ENCODE measurements at regions of chr12 and their contacts with region 1.

Region 1: GRCh38 chr12:29380536-29381523 is at the start of gene ERGIC2:
- DNase-seq: peak; percentile 79 to 98 (median 86)
- ATAC-seq: peak; percentile 87
- H3K4me3 ChIP-seq: peak within 1 kb of the TSS; percentile 83
- H3K4me3 Mint-ChIP-seq: peak within 1 kb of the TSS; percentile 98
- H3K27ac ChIP-seq: peak within 1 kb of the TSS; percentile 94 to 96
- H3K27ac Mint-ChIP-seq: peak within 1 kb of the TSS; percentile 96
- H3K4me1 ChIP-seq: no peaks in the 10 kb centered on the region
- H3K4me1 Mint-ChIP-seq: peaks cover 43% of the 10 kb centered on the region
- H3K27me3 ChIP-seq: no peaks in the 10 kb centered on the region
- H3K27me3 Mint-ChIP-seq: no peaks in the 10 kb centered on the region
- CTCF ChIP-seq: no peak
- total RNA-seq, gene ERGIC2: 29.4 to 32.1 TPM

Region 2: GRCh38 chr12:27710592-27711316 is 1670.1 kb before region 1 on chr12 and contains the start of gene MRPS35:
- CTCF ChIA-PET with region 1: no interaction called
- POLR2A ChIA-PET with region 1: no interaction called
- intact Hi-C with region 1: loop called in 1 of 2 experiments (anchors 10 kb)
- DNase-seq: peak; percentile 83 to 95 (median 88)
- ATAC-seq: peak; percentile 96
- H3K4me3 ChIP-seq: peak within 1 kb of the TSS; percentile 71
- H3K4me3 Mint-ChIP-seq: peak within 1 kb of the TSS; percentile 98
- H3K27ac ChIP-seq: peak within 1 kb of the TSS; percentile 60 to 69
- H3K27ac Mint-ChIP-seq: peak within 1 kb of the TSS; percentile 96
- H3K4me1 ChIP-seq: peaks cover 25% of the 10 kb centered on the region
- H3K4me1 Mint-ChIP-seq: peaks cover 41% of the 10 kb centered on the region
- H3K27me3 ChIP-seq: no peaks in the 10 kb centered on the region
- H3K27me3 Mint-ChIP-seq: no peaks in the 10 kb centered on the region
- CTCF ChIP-seq: no peak
- total RNA-seq, gene MRPS35: 22.1 to 23.9 TPM

Region 3: GRCh38 chr12:28759312-28759751 is 621.5 kb before region 1 on chr12:
- CTCF ChIA-PET with region 1: no interaction called
- POLR2A ChIA-PET with region 1: no interaction called
- intact Hi-C with region 1: no loop called
- DNase-seq: no peak
- ATAC-seq: no peak
- H3K4me3 ChIP-seq: no peak overlapping the region
- H3K4me3 Mint-ChIP-seq: no peak overlapping the region
- H3K27ac ChIP-seq: no peak overlapping the region
- H3K27ac Mint-ChIP-seq: no peak overlapping the region
- H3K4me1 ChIP-seq: no peaks in the 10 kb centered on the region
- H3K4me1 Mint-ChIP-seq: no peaks in the 10 kb centered on the region
- H3K27me3 ChIP-seq: no peaks in the 10 kb centered on the region
- H3K27me3 Mint-ChIP-seq: no peaks in the 10 kb centered on the region
- CTCF ChIP-seq: no peak

Region 4: DNA sequence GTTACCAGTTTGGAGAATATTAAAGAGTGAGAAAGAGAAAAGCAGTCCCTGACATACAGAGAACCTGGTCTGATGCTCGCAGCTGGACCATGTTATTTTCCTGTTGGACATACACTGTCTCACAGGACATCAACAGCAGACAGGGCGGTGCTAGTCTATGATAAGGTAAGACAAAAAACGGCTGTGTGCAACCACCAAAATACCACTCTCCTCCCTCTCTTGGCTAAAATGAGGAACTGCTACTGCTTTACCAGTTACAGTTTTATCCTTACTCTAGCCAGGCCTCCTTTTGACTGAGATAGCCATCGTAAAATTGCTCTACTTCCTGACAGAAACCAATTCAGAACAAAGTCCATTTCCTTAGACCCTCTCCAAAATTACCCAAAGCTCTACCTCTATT is 47.1 kb after region 1 on chr12:
- CTCF ChIA-PET with region 1: interaction called, 4 read pairs
- POLR2A ChIA-PET with region 1: interaction called, 10 read pairs
- intact Hi-C with region 1: loop called (anchors 2 to 5 kb)
- DNase-seq: peak in 5 of 14 experiments; percentile 1 to 47 (median 35)
- ATAC-seq: peak; percentile 74
- H3K4me3 ChIP-seq: no peak overlapping the region
- H3K4me3 Mint-ChIP-seq: no peak overlapping the region
- H3K27ac ChIP-seq: no peak overlapping the region
- H3K27ac Mint-ChIP-seq: no peak overlapping the region
- H3K4me1 ChIP-seq: no peaks in the 10 kb centered on the region
- H3K4me1 Mint-ChIP-seq: no peaks in the 10 kb centered on the region
- H3K27me3 ChIP-seq: no peaks in the 10 kb centered on the region
- H3K27me3 Mint-ChIP-seq: peaks cover 22% of the 10 kb centered on the region
- CTCF ChIP-seq: peak; percentile 63

Region 5: GRCh38 chr12:30754709-30755394 is 1374.0 kb after region 1 on chr12 and contains the start of gene CAPRIN2:
- CTCF ChIA-PET with region 1: no interaction called
- POLR2A ChIA-PET with region 1: interaction called, 18 read pairs
- intact Hi-C with region 1: loop called in 1 of 2 experiments (anchors 5 kb)
- DNase-seq: peak; percentile 86 to 97 (median 94)
- ATAC-seq: peak; percentile 90
- H3K4me3 ChIP-seq: peak within 1 kb of the TSS; percentile 81
- H3K4me3 Mint-ChIP-seq: peak within 1 kb of the TSS; percentile 94
- H3K27ac ChIP-seq: peak within 1 kb of the TSS; percentile 51 to 76
- H3K27ac Mint-ChIP-seq: peak within 1 kb of the TSS; percentile 77
- H3K4me1 ChIP-seq: peaks cover 16% of the 10 kb centered on the region
- H3K4me1 Mint-ChIP-seq: peaks cover 45% of the 10 kb centered on the region
- H3K27me3 ChIP-seq: no peaks in the 10 kb centered on the region
- H3K27me3 Mint-ChIP-seq: no peaks in the 10 kb centered on the region
- CTCF ChIP-seq: peak; percentile 18
- total RNA-seq, gene CAPRIN2: 21.2 to 24.6 TPM